Posterior vena cava (tissue), 2 donors: ENCODE measurements at regions of chr4 and their contacts with region 1.

Region 1: DNA sequence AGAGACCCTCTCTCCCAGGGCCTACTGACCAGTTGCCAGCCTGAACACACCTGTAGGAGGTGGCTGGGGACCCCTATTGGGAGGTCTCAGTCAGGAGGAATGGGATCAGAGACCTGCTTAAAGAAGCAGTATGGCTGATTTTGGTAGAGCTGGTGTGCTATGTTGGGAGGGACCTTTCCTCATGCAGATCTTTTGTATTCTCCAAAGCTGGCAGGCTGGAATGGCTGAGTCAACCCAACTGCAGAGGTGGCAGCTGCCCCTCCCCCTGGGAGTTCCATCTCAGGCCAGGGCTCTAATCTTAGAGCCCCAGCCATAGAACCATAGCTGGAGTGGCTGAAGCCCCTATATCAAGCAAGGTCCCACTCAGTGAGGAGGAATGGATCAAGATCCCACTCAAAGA is 279.3 kb upstream of the BMP3 start:
- DNase-seq: no peak

Region 2: GRCh38 chr4:79348405-79348804 is 1402.8 kb before region 1 on chr4:
- intact Hi-C with region 1: loop called in 1 of 2 experiments (anchors 5 kb)
- DNase-seq: no peak

Region 3: DNA sequence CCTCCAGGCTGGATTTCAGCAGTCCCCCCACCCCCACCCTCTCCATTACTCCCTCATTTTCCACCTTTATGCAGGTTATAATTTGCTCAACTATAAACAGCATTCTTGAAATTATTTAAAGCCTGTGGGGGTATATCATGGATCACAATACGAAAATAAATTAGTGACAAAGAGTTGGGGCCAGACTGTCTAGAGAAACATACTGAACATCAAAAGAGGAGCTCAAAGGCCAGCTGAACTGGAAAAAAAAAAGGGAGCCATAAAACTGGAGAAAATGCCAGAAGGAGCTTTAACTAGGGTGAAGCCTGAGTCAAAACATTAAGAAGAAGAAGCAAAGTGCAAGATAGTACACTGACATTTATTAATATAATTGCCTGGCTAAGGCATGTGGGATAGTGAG is 815.9 kb before region 1 on chr4:
- intact Hi-C with region 1: no loop called
- DNase-seq: no peak